CD8-positive, alpha-beta T cell (primary cell): ENCODE measurements at regions of chr9 and their contacts with region 1.

Region 1: DNA sequence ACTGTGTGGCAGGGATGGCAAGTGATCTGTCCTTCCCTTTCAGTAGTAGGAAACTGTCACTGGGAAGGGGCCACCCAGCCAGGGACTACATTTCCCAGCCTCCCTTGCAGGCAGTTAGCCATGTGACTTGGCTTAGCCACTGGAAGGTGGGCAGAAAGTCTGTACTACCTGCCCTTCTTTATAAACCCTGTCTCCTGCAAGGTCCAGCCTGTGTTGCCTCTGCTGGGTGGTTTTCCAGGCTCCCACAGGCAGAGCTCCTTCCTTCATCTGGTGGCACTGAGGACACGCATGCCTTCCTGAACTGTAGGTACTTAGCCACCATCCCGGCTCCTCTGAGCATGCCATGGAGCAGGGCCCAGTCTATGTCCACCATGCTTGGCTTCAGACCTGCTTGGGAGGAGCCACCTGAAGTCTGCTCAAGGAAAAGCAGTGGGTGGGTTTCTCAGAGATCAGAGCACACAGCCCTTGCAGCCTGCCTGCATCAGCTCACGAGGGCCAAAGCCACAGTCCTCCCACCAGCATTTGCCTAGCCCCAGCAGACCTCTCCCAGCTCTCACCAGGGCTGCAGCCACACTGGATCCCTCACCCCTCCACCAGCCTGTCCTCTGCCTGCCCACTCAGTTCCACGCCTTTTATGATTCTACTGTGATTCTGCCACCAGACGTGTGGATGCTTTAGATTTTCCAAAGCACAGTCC is 16.7 kb upstream of the SLC25A51 start:
- DNase-seq: peak in 2 of 9 experiments; percentile 19 to 24
- ATAC-seq: peak; percentile 36
- H3K4me3 ChIP-seq: no peak overlapping the region
- H3K4me3 Mint-ChIP-seq: no peak overlapping the region
- H3K27ac ChIP-seq: no peak overlapping the region
- H3K27ac Mint-ChIP-seq: no peak overlapping the region
- H3K4me1 ChIP-seq: no peaks in the 10 kb centered on the region
- H3K4me1 Mint-ChIP-seq: no peaks in the 10 kb centered on the region
- H3K27me3 ChIP-seq: no peaks in the 10 kb centered on the region
- H3K27me3 Mint-ChIP-seq: no peaks in the 10 kb centered on the region
- CTCF ChIP-seq: no peak

Region 2: GRCh38 chr9:36961561-36962298 is 958.9 kb before region 1 on chr9:
- CTCF ChIA-PET with region 1: no interaction called
- POLR2A ChIA-PET with region 1: no interaction called
- intact Hi-C with region 1: no loop called
- DNase-seq: no peak
- ATAC-seq: no peak
- H3K4me3 ChIP-seq: no peak overlapping the region
- H3K4me3 Mint-ChIP-seq: no peak overlapping the region
- H3K27ac ChIP-seq: no peak overlapping the region
- H3K27ac Mint-ChIP-seq: no peak overlapping the region
- H3K4me1 ChIP-seq: no peaks in the 10 kb centered on the region
- H3K4me1 Mint-ChIP-seq: peaks cover 4% of the 10 kb centered on the region
- H3K27me3 ChIP-seq: peaks cover 0 to 2% of the 10 kb centered on the region in 2 experiments
- H3K27me3 Mint-ChIP-seq: peaks cover 43% of the 10 kb centered on the region
- CTCF ChIP-seq: no peak

Region 3: GRCh38 chr9:37350486-37351190 is 570.0 kb before region 1 on chr9:
- CTCF ChIA-PET with region 1: no interaction called
- POLR2A ChIA-PET with region 1: no interaction called
- intact Hi-C with region 1: no loop called
- DNase-seq: no peak
- ATAC-seq: no peak
- H3K4me3 ChIP-seq: no peak overlapping the region
- H3K4me3 Mint-ChIP-seq: no peak overlapping the region
- H3K27ac ChIP-seq: no peak overlapping the region
- H3K27ac Mint-ChIP-seq: no peak overlapping the region
- H3K4me1 ChIP-seq: no peaks in the 10 kb centered on the region
- H3K4me1 Mint-ChIP-seq: no peaks in the 10 kb centered on the region
- H3K27me3 ChIP-seq: no peaks in the 10 kb centered on the region
- H3K27me3 Mint-ChIP-seq: no peaks in the 10 kb centered on the region
- CTCF ChIP-seq: no peak

Region 4: DNA sequence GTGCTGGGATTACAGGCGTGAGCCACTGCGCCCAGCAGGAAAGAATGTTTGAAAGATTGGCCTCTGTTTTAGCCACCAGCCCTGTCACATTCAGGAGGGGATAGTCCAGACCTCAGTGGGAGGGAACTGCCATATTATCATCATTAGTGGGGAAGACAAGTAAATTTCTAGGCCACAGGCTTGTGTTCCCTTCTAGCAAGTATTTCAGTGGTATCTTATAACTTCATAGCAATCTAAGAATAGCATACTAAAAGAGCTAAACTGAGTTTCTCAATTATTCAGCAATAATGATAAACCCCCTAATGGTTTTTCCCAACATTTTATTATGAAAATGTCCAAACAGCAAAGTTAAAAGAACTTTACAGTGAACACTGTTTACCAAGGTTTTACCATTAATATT is 46.7 kb before region 1 on chr9:
- CTCF ChIA-PET with region 1: no interaction called
- POLR2A ChIA-PET with region 1: no interaction called
- intact Hi-C with region 1: no loop called
- DNase-seq: no peak
- ATAC-seq: no peak
- H3K4me3 ChIP-seq: no peak overlapping the region
- H3K4me3 Mint-ChIP-seq: no peak overlapping the region
- H3K27ac ChIP-seq: no peak overlapping the region
- H3K27ac Mint-ChIP-seq: no peak overlapping the region
- H3K4me1 ChIP-seq: no peaks in the 10 kb centered on the region
- H3K4me1 Mint-ChIP-seq: no peaks in the 10 kb centered on the region
- H3K27me3 ChIP-seq: no peaks in the 10 kb centered on the region
- H3K27me3 Mint-ChIP-seq: no peaks in the 10 kb centered on the region
- CTCF ChIP-seq: no peak

Region 5: DNA sequence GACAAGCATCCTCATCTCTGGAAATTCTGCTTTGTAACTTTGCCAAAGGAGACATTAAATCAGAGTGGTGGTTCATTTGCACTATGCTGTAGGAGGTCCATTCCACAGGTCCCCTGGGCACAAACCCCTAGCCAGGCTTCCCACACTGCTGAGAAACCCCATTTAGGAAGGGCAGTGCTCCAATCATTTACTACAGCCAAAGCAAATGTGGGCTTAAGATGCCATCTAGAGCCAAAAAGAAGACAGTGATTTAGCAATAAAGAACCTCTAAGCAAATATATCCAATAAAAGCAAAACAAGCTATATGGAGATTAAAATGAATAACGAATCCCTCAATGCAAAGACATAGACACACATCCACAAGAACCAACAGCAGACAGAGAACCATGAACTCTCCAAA is 342.9 kb after region 1 on chr9:
- CTCF ChIA-PET with region 1: no interaction called
- POLR2A ChIA-PET with region 1: no interaction called
- intact Hi-C with region 1: loop called in 1 of 2 experiments (anchors 10 kb)
- DNase-seq: peak in 2 of 9 experiments; percentile 29 to 44
- ATAC-seq: no peak
- H3K4me3 ChIP-seq: no peak overlapping the region
- H3K4me3 Mint-ChIP-seq: no peak overlapping the region
- H3K27ac ChIP-seq: no peak overlapping the region
- H3K27ac Mint-ChIP-seq: no peak overlapping the region
- H3K4me1 ChIP-seq: no peaks in the 10 kb centered on the region
- H3K4me1 Mint-ChIP-seq: no peaks in the 10 kb centered on the region
- H3K27me3 ChIP-seq: no peaks in the 10 kb centered on the region
- H3K27me3 Mint-ChIP-seq: peaks cover 4% of the 10 kb centered on the region
- CTCF ChIP-seq: no peak

Region 6: DNA sequence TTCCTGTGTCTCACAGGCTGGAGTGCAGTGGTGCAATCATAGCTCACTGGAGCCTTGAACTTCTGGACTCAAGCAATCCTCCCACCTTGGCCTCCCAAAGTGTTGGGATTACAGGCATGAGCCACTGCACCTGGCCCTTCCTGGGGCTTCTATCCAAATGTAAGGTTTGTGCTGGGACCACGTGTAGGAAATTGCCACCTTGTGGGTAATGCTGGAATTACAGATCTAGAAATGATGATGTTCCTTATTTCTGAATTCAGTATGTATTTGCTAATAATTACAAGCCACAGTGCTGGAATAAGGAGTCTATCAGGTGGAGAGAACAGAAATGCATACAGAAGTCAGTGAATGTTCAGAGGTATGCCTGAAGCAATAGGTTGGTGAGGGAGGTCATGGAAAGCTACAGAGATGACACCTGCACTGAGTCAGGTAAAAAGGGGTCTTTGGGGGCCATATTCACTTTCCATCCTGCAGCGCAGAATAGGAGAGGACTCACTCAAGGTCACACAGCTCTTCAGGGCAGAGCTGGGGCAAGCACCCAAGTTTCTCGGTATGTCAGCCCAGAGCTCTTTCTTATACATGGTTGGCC is 512.4 kb after region 1 on chr9:
- CTCF ChIA-PET with region 1: interaction called, 42 read pairs
- POLR2A ChIA-PET with region 1: no interaction called
- intact Hi-C with region 1: loop called in 1 of 2 experiments (anchors 1 kb)
- DNase-seq: peak in 2 of 9 experiments; percentile 37 to 51
- ATAC-seq: no peak
- H3K4me3 ChIP-seq: no peak overlapping the region
- H3K4me3 Mint-ChIP-seq: no peak overlapping the region
- H3K27ac ChIP-seq: no peak overlapping the region
- H3K27ac Mint-ChIP-seq: no peak overlapping the region
- H3K4me1 ChIP-seq: no peaks in the 10 kb centered on the region
- H3K4me1 Mint-ChIP-seq: peaks cover 6% of the 10 kb centered on the region
- H3K27me3 ChIP-seq: peaks cover 0 to 2% of the 10 kb centered on the region in 2 experiments
- H3K27me3 Mint-ChIP-seq: peaks cover 5% of the 10 kb centered on the region
- CTCF ChIP-seq: peak; percentile 63